Heart left ventricle (tissue), 16 donors: ENCODE measurements at regions of chr22 and their contacts with region 1.

Region 1: GRCh38 chr22:32528984-32529982 is 54.7 kb downstream of the FBXO7 start:
- DNase-seq: peak; percentile 88 to 92 (median 90)
- ATAC-seq: peak; percentile 62 to 75 (median 65)
- H3K4me3 ChIP-seq: peak overlapping the region in 2 of 12 donors; percentile 13 to 24
- H3K27ac ChIP-seq: peak overlapping the region; percentile 50 to 94 (median 80)
- H3K4me1 ChIP-seq: peaks cover 5 to 58% (median 50%) of the 10 kb centered on the region in 12 donors
- H3K27me3 ChIP-seq: no peaks in the 10 kb centered on the region
- CTCF ChIP-seq: peak; percentile 79 to 94 (median 90)
- POLR2A ChIP-seq: no peak

Region 2: DNA sequence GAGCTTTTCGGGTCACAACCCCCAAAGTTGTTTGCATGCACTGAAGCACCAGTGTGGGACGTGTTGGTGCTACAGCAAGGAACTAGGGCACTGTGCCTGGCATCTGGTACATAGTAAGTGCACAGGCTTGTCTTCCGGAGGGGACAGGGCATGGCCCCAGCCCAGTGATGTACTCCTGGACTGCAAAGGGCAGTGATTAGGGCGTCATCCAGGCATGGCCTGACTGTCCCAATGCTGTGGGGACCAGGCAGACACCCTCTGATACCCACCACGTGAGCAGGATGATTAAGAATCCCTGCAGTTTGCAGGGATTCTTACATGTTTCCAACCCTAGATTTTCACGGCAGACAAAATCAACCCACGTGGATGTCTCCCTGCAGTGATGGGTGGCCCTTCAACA is 221.7 kb before region 1 on chr22:
- intact Hi-C with region 1: no loop called
- DNase-seq: no peak
- ATAC-seq: no peak
- H3K4me3 ChIP-seq: no peak overlapping the region
- H3K27ac ChIP-seq: no peak overlapping the region
- H3K4me1 ChIP-seq: no peaks in the 10 kb centered on the region
- H3K27me3 ChIP-seq: peaks cover 0 to 21% (median 0%) of the 10 kb centered on the region in 9 donors
- CTCF ChIP-seq: no peak
- POLR2A ChIP-seq: no peak

Region 3: DNA sequence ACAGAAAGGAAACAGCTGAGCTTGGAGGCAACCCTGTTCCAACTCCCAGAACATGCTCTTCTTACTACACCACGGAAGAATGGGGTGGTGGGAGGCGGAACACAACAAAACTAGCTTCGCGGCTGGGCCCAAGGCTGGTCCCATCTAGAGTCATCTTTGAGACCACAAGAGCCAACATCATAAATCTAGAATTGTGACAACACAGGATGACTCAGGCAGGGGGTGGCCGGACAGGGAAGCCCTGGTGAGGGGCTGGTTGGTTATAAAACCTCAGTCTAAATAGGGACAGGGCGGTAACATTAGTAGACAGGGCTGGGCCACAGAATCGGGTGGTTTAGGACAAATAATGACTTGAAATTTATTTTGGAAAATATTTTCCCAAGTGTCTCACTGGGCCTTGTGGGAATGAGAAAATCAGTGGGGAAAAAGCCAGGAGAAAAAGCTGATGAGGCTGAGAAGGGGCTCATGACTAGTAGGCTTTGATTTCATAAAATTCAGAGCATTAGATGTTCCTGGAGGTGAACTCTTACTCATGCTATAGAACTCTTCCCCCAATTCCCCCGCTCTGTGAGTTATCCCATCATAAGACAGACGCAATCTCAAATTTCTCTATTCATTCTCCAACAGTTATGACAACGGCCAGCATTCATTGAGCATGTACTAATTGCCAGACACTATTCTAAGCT is 120.4 kb after region 1 on chr22:
- intact Hi-C with region 1: loop called in 1 of 10 experiments (anchors 5 kb)
- DNase-seq: peak in 2 of 5 donors; percentile 50 to 65
- ATAC-seq: peak; percentile 36 to 80 (median 58)
- H3K4me3 ChIP-seq: no peak overlapping the region
- H3K27ac ChIP-seq: peak overlapping the region in 7 of 12 donors; percentile 17 to 72 (median 50)
- H3K4me1 ChIP-seq: peaks cover 0 to 13% (median 5%) of the 10 kb centered on the region in 12 donors
- H3K27me3 ChIP-seq: no peaks in the 10 kb centered on the region
- CTCF ChIP-seq: no peak
- POLR2A ChIP-seq: no peak

Region 4: GRCh38 chr22:32764330-32765131 is 235.2 kb after region 1 on chr22:
- intact Hi-C with region 1: loop called in 1 of 10 experiments (anchors 10 kb)
- DNase-seq: peak; percentile 38 to 76 (median 72)
- ATAC-seq: peak; percentile 22 to 81 (median 70)
- H3K4me3 ChIP-seq: no peak overlapping the region
- H3K27ac ChIP-seq: peak overlapping the region; percentile 64 to 89 (median 72)
- H3K4me1 ChIP-seq: peaks cover 5 to 53% (median 33%) of the 10 kb centered on the region in 12 donors
- H3K27me3 ChIP-seq: peaks cover 0 to 3% (median 0%) of the 10 kb centered on the region in 9 donors
- CTCF ChIP-seq: no peak
- POLR2A ChIP-seq: no peak

Region 5: GRCh38 chr22:32917577-32918354 is 388.5 kb after region 1 on chr22:
- intact Hi-C with region 1: loop called in 1 of 10 experiments (anchors 5 kb)
- DNase-seq: peak in 3 of 5 donors; percentile 14 to 40 (median 35)
- ATAC-seq: peak in 1 of 4 donors; percentile 56
- H3K4me3 ChIP-seq: no peak overlapping the region
- H3K27ac ChIP-seq: peak overlapping the region in 2 of 12 donors; percentile 36 to 47
- H3K4me1 ChIP-seq: peaks cover 0 to 28% (median 14%) of the 10 kb centered on the region in 12 donors
- H3K27me3 ChIP-seq: no peaks in the 10 kb centered on the region
- CTCF ChIP-seq: no peak
- POLR2A ChIP-seq: no peak

Region 6: DNA sequence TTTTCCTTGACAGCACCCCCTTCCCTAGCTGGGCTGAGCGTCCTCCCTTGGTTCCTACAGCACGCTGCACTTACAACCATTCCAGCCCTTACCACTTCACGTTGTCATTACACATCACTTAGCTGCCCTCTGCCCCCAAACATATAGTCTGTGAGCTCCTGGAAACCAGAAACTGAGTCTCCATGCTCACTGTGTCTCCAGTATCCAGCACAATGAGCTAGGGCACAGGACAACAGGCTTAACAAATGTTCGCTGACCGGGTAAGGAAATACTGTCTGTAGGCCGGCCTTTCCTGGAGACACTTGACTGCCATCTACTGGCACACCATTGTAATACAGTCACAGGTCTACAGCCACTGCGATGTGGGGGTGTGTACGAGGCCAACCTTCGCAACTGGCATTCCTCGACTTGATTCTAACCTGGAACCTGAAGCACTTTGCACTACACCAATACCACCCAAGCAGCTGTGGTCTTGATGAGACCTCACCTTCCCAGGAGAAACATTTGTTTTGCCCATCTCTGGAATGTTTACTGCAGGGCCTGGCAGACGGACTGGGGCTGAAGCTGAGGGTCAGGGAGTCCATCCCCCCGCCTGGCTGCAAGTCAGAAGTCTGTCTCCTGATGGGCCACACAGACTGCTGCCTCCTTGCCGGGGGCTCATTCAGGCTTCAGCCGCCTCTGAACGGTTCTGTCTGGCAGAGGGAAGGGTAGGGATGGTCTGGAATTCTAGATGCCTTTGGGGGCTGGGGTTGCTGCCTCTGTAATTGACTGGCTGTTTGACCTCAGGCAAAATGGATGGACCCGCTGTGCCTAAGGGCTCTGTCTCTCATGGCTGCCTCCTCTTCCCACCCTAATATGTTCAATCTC is 456.8 kb after region 1 on chr22:
- intact Hi-C with region 1: loop called in 2 of 10 experiments (anchors 5 kb)
- DNase-seq: peak in 4 of 5 donors; percentile 73 to 82 (median 76)
- ATAC-seq: peak; percentile 87 to 99 (median 97)
- H3K4me3 ChIP-seq: no peak overlapping the region
- H3K27ac ChIP-seq: peak overlapping the region in 1 of 12 donors; percentile 35
- H3K4me1 ChIP-seq: peaks cover 0 to 10% (median 3%) of the 10 kb centered on the region in 12 donors
- H3K27me3 ChIP-seq: no peaks in the 10 kb centered on the region
- CTCF ChIP-seq: peak; percentile 84 to 95 (median 92)
- POLR2A ChIP-seq: no peak

Region 7: DNA sequence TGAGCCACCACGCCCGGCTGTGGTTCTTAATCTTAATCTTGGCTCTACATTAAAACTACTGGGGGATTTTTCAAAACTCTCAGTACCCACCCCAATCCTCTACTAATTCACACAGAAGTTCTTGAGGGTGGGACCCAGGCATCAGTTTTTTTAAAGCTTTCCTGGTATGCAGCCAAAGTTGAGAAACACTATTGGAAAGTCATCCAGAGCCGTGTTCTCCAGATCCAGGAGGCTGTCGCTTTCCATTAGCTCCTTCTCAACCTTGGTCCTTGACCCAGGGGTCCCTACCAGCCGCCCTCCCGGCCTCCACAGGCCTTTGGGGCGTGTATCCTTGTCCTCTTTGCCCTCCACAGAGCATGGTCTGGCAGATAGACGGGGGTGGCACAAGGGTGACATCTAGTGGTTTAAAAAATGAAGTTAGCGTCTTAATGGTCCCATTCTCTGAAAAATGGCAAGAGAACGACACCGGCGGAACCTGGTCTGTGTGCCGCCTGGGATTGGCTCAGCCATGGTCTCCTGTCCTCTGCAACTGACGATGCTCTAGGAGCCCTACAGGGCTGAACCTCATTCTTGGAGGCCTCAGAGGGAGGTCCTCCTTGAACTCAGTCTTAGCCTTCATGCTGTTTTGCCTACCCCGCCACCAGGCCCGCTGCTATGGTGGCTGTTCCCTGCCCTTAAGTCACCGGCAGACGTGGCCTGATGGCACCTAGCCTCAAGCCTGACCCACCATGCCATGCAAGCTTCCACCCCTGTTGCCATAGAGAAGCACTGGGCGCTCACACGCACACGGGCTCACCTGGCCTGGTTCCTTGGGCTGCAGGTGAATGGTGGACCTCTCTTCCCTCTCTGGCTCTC is 680.9 kb after region 1 on chr22:
- intact Hi-C with region 1: loop called in 1 of 10 experiments (anchors 10 kb)
- DNase-seq: no peak
- ATAC-seq: peak in 3 of 4 donors; percentile 59 to 80 (median 78)
- H3K4me3 ChIP-seq: no peak overlapping the region
- H3K27ac ChIP-seq: no peak overlapping the region
- H3K4me1 ChIP-seq: peaks cover 0 to 6% (median 0%) of the 10 kb centered on the region in 12 donors
- H3K27me3 ChIP-seq: peaks cover 0 to 4% (median 0%) of the 10 kb centered on the region in 9 donors
- CTCF ChIP-seq: peak; percentile 22 to 63 (median 46)
- POLR2A ChIP-seq: no peak